Posterior cingulate gyrus (tissue), 11 donors: ENCODE measurements at regions of chr18 and their contacts with region 1.

Region 1: GRCh38 chr18:5879479-5879882 is 15.8 kb downstream of the TMEM200C start:
- DNase-seq: no peak

Region 2: GRCh38 chr18:5611221-5611620 is 268.3 kb before region 1 on chr18:
- intact Hi-C with region 1: no loop called
- DNase-seq: no peak

Region 3: DNA sequence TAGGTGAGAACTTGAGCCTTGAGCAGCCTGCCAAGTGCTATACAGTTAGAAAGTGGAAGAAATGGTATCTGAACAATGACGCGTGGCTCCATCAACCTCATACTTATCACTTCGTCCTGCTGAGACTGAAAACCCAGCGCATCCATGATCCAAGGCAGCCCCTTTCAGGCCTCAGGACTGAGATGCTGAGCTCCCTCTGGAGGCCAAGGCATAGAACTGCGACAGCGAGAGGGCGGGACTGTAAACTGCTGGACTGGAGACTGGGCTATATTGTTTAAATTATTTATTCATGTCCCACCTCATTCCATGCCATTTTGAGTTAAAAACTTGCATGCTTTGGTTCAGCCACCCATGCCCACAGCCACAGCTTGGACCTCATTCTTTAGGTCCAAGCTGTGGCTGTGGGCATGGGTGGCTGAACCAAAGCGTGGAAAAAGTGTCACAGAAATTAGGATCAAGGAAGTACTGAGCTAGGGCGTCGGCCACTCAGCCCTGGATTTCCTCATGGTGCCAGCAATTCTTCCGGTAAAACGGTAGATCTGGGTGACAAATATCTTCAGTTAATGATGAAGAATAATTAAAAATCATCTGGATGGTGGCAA is 339.7 kb after region 1 on chr18:
- intact Hi-C with region 1: loop called (anchors 5 kb)
- DNase-seq: peak in 3 of 10 donors; percentile 5 to 50 (median 33)

Region 4: GRCh38 chr18:6482198-6482977 is 602.9 kb after region 1 on chr18:
- intact Hi-C with region 1: loop called (anchors 1 kb)
- DNase-seq: peak in 6 of 10 donors; percentile 22 to 90 (median 52)

Region 5: GRCh38 chr18:6543330-6543908 is 663.9 kb after region 1 on chr18:
- intact Hi-C with region 1: loop called (anchors 5 kb)
- DNase-seq: no peak